Activated CD4-positive, alpha-beta T cell treated with anti-CD3 and anti-CD28 coated beads for 36 hours (primary cell): ENCODE measurements at regions of chr16 and their contacts with region 1.

Region 1: DNA sequence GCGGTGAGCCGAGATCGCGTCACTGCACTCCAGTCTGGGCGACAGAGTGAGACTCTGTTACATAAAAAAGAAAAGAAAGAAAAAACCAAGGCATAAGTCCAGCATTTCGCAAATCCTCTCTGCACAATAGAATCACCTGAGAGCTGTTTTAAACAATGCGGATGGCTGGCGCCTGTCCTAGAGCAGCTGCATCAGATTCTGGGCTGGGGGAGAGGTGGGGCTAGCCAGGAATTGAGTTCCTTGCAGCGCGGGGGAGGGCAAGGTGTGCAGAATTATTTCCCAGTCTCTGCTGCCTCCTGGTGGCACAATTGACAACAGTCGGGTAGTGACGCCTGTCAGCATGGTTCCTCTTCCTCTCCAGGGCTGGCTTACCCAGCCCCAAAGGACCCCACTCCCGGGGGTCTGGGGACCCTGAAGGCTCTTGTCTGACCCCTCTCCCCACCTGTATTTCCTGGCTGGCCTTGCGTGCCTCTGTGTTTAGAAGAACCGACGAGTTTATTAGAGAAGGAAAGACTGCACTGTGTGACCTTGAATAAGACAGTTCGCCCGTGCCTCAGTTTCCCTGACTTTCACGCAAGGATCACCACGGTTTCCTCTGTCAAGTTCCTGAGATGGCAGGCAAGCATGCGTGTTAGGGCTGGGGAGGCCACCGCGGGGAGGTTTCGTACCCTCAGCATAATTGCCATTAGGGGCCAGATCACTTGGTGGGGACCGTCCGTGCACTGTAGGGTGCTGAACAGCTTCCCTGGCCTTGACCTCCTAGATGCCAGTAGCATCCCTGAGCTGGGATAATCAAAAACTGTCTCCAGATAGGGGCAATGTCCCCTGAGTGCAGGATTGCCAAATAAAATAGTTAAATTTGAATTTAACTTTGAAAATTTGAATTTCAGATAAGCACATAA is 41.0 kb upstream of the PLCG2 start:
- DNase-seq: peak; percentile 93
- ATAC-seq: peak; percentile 98
- H3K4me3 Mint-ChIP-seq: peak overlapping the region; percentile 55
- H3K27ac Mint-ChIP-seq: peak overlapping the region; percentile 51
- H3K4me1 Mint-ChIP-seq: no peaks in the 10 kb centered on the region
- H3K27me3 Mint-ChIP-seq: no peaks in the 10 kb centered on the region

Region 2: DNA sequence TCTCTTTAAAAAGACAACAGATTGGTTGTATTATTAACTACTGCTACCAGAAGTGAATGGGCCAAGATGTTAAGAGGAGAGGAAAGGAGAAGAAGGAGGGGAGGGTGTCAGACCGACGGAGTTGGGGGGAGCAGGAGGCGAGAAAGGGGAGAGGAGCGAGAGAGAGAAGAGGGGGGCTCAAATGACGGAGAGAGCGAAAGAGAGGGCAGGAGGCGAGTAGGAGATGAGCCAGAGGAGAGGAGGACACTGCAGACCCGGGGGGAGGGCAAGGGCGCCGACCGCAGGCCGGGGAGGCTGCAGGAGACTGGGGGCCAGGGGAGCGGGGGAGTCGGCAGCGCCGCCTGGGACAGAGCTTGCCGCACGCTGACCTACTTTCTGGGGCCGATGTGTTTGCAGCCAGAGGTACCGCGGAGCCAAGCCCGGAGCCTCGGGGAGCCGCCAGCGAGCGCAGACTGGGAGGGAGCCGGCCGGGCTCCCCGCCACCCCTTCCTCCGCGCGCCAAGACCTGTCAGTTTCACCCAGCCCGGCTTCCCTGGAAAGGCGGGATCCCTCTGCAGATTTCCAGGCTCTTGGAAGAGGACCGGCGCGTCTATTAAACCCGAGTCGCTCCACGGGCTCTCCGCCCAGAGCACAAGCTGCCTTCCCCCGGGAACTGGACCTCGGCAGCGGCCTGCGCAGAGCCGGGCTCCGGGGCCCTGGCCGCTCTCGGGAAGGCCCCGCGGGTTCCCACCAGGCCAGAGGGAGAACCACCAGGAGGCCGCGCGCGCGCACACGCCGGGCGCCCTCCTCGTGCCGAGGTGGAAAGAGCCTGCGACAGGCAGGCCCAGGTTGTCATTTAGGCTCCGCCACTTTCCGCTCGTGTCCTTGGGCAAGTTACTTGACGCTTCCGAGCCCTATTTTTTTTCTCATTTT is 806.1 kb before region 1 on chr16:
- CTCF ChIA-PET with region 1: no interaction called
- POLR2A ChIA-PET with region 1: no interaction called
- intact Hi-C with region 1: loop called in 1 of 2 experiments (anchors 5 kb)
- DNase-seq: peak; percentile 42
- ATAC-seq: peak; percentile 65
- H3K4me3 Mint-ChIP-seq: peak overlapping the region; percentile 39
- H3K27ac Mint-ChIP-seq: no peak overlapping the region
- H3K4me1 Mint-ChIP-seq: peaks cover 9% of the 10 kb centered on the region
- H3K27me3 Mint-ChIP-seq: peaks cover 57% of the 10 kb centered on the region

Region 3: DNA sequence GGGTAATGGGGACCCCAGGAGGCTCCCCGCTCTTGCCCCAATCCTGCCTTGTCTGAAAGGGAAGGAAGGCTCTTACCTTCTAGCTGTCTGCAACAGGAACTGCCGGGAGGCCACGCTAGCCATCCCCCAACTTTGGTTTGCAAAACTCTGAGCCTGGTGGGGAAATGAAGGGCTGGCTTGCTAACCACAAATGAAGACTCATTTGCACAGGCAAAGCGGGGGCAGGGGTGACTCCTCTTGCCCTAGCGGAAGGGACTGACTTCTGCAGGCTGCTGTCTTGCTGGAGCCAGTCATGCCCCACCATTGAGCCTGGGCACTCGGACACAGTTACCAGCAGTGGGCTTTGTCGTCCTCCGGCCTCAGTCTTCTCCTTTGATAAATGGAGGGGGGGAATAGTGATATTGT is 93.6 kb after region 1 on chr16:
- CTCF ChIA-PET with region 1: no interaction called
- POLR2A ChIA-PET with region 1: no interaction called
- intact Hi-C with region 1: no loop called
- DNase-seq: peak; percentile 69
- ATAC-seq: peak; percentile 91
- H3K4me3 Mint-ChIP-seq: no peak overlapping the region
- H3K27ac Mint-ChIP-seq: no peak overlapping the region
- H3K4me1 Mint-ChIP-seq: peaks cover 13% of the 10 kb centered on the region
- H3K27me3 Mint-ChIP-seq: peaks cover under 1% of the 10 kb centered on the region